Naive thymus-derived CD8-positive, alpha-beta T cell (primary cell): ENCODE measurements at regions of chr17 and their contacts with region 1.

Region 1: GRCh38 chr17:57849874-57850754 is at the start of gene MRPS23:
- DNase-seq: peak; percentile 87 to 98 (median 95)
- ATAC-seq: peak; percentile 91 to 93
- H3K4me3 Mint-ChIP-seq: peak within 1 kb of the TSS; percentile 96 to 100 (median 98)
- H3K27ac Mint-ChIP-seq: peak within 1 kb of the TSS; percentile 99 to 100 (median 100)
- H3K4me1 Mint-ChIP-seq: peaks cover 21 to 55% (median 46%) of the 10 kb centered on the region in 4 donors
- H3K27me3 Mint-ChIP-seq: no peaks in the 10 kb centered on the region
- polyA plus RNA-seq, gene MRPS23: 41.1 to 42.8 (median 41.6) TPM

Region 2: GRCh38 chr17:57552114-57552624 is 297.9 kb before region 1 on chr17:
- POLR2A ChIA-PET with region 1: no interaction called
- DNase-seq: peak in 9 of 10 donors; percentile 10 to 69 (median 30)
- ATAC-seq: peak; percentile 60 to 69
- H3K4me3 Mint-ChIP-seq: peak overlapping the region in 8 of 10 donors; percentile 14 to 72 (median 56)
- H3K27ac Mint-ChIP-seq: peak overlapping the region in 9 of 10 donors; percentile 44 to 89 (median 79)
- H3K4me1 Mint-ChIP-seq: peaks cover 32 to 92% (median 69%) of the 10 kb centered on the region in 4 donors
- H3K27me3 Mint-ChIP-seq: no peaks in the 10 kb centered on the region

Region 3: DNA sequence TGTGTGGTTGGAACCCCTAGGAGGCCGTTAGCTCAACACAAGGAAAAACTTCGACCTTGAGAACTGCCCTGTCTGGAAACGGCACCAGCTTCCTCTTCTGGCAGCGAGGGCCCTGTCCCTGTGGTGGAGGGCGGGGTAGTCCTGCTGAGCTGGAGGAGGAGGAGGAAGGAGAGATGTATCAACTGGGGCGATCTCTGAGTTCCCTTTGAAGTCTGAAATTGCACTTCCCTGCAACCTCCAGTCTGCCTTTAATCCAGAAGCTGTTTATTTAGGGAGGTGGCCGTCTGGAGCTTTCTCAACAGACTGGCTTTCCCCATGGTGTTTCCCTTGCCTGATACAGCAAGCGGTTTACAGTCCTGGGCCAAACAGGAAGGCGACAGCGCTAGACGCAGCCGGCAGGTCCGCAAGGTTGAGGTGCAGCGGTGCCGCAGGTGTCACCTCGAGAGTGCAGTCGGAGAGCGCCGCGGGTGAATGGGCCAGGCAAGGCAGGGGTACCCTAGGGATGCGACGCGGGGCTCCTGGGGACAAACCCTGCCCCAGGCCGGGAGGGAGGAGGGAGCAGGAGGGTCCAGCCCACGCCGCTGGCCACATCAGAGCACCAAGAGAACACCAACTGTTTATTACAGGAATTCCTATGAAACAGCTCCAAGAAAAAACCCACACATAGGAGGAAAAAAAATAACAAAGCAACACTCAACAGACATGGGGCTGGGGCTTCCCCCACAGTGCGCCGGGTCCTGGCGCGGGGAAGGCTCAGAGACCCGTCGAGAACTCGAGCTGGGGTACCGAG is 11.1 kb after region 1 on chr17:
- POLR2A ChIA-PET with region 1: interaction called, 24 read pairs
- DNase-seq: peak in 4 of 10 donors; percentile 14 to 33 (median 29)
- ATAC-seq: peak; percentile 80
- H3K4me3 Mint-ChIP-seq: peak overlapping the region; percentile 74 to 92 (median 86)
- H3K27ac Mint-ChIP-seq: peak overlapping the region in 6 of 10 donors; percentile 27 to 76 (median 54)
- H3K4me1 Mint-ChIP-seq: peaks cover 9 to 12% (median 10%) of the 10 kb centered on the region in 4 donors
- H3K27me3 Mint-ChIP-seq: peaks cover 4 to 39% (median 7%) of the 10 kb centered on the region in 5 donors

Region 4: GRCh38 chr17:57987580-57988421 is 137.7 kb after region 1 on chr17 and contains the start of gene VEZF1:
- POLR2A ChIA-PET with region 1: interaction called, 18 read pairs
- DNase-seq: peak; percentile 63 to 87 (median 75)
- ATAC-seq: peak; percentile 75 to 79
- H3K4me3 Mint-ChIP-seq: peak within 1 kb of the TSS; percentile 88 to 96 (median 95)
- H3K27ac Mint-ChIP-seq: peak within 1 kb of the TSS; percentile 92 to 97 (median 95)
- H3K4me1 Mint-ChIP-seq: peaks cover 39 to 75% (median 70%) of the 10 kb centered on the region in 4 donors
- H3K27me3 Mint-ChIP-seq: peaks cover 0 to 2% (median 0%) of the 10 kb centered on the region in 5 donors
- polyA plus RNA-seq, gene VEZF1: 41.1 to 48.9 (median 42.1) TPM

Region 5: DNA sequence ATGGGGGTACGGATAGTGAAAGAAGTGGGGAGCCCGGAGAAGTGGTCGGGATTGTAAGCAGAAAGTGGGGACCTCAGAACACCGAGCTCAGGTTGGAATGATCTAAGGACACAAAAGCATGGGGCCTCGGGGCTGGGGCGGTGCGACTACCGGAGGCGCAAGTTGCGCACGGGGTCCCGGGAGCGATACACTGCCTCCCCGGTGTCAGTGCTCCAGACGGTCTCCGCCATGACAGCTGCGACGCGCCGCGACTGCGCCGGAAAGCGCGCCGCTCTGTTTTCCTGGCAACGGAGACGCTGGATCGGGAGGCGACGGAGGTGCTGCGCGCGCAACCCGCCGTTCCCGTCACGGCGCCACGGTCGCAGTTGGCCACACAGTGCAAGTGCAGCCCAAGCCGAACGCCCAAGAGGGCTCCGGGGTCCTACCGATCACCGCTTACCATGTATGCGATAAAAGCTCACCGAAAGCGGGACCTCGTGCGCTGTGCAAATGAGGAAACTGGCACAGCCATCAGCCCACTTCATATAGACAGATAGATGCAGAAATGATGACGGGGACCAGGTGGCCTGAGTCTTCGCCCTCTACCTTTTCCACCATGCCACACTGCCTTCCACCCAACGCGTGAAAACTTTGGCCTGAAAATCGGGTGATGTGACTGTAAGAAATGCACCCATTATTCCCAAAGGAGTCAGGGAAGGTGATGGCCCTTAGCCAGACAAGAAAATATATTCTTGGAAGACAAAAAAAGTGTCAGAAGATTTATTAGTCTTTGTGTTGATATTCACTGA is 369.1 kb after region 1 on chr17 and contains the start of gene MKS1:
- POLR2A ChIA-PET with region 1: interaction called, 10 read pairs
- DNase-seq: peak; percentile 91 to 97 (median 95)
- ATAC-seq: peak; percentile 95
- H3K4me3 Mint-ChIP-seq: peak within 1 kb of the TSS; percentile 84 to 94 (median 91)
- H3K27ac Mint-ChIP-seq: peak within 1 kb of the TSS; percentile 94 to 98 (median 97)
- H3K4me1 Mint-ChIP-seq: peaks cover 9 to 32% (median 24%) of the 10 kb centered on the region in 4 donors
- H3K27me3 Mint-ChIP-seq: peaks cover 0 to 6% (median 2%) of the 10 kb centered on the region in 5 donors
- polyA plus RNA-seq, gene MKS1: 10.5 to 14.2 (median 13.0) TPM